ENCODE measurements at regions of chr4 and their contacts with region 1.

Region 1: DNA sequence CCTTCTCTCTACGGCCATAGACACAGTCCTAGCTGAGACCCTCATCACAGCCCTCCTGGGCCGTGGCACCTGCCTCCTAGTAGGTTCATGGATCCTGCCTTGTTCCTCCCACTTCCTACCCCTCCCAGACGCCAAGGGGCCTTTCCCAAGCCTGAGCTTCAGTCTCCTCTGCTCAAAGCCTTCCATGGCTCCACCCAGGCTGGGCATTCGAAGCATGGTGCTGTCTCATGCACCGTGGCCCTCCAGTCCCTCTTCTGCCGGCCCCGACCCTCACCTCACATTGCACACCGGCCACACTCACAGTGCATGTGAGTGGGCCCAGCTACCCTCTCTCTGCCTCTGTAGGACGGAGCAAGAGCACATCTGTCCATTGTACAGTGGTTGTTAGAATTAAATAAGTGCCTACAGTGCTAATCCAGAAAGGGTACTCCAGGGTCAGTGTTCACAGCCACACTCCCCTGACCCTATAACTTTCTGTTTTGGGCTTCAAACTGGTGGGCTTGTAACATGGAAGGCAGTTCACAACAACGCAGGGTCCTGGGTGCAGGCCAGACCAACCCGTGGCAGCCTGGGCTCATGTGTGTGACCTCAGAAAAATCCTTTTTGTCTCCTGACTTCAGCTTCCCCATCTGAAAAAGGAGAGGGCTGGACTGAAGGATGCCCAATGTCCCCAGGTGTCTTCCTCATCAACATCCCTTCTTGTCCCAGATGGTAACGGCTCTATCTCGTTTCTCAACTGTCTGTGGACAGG is 21.5 kb upstream of the KIAA0232 start:
- H3K4me3 Mint-ChIP-seq: no peak overlapping the region
- H3K27ac Mint-ChIP-seq: no peak overlapping the region
- H3K4me1 Mint-ChIP-seq: no peaks in the 10 kb centered on the region
- H3K27me3 Mint-ChIP-seq: peaks cover 33% of the 10 kb centered on the region

Region 2: GRCh38 chr4:6724421-6725111 is 36.5 kb before region 1 on chr4:
- intact Hi-C with region 1: loop called (anchors 1 kb)
- H3K4me3 Mint-ChIP-seq: no peak overlapping the region
- H3K27ac Mint-ChIP-seq: peak overlapping the region; percentile 69
- H3K4me1 Mint-ChIP-seq: peaks cover 43% of the 10 kb centered on the region
- H3K27me3 Mint-ChIP-seq: peaks cover 6% of the 10 kb centered on the region